Heart right ventricle (tissue), 16 donors: ENCODE measurements at regions of chr11 and their contacts with region 1.

Region 1: DNA sequence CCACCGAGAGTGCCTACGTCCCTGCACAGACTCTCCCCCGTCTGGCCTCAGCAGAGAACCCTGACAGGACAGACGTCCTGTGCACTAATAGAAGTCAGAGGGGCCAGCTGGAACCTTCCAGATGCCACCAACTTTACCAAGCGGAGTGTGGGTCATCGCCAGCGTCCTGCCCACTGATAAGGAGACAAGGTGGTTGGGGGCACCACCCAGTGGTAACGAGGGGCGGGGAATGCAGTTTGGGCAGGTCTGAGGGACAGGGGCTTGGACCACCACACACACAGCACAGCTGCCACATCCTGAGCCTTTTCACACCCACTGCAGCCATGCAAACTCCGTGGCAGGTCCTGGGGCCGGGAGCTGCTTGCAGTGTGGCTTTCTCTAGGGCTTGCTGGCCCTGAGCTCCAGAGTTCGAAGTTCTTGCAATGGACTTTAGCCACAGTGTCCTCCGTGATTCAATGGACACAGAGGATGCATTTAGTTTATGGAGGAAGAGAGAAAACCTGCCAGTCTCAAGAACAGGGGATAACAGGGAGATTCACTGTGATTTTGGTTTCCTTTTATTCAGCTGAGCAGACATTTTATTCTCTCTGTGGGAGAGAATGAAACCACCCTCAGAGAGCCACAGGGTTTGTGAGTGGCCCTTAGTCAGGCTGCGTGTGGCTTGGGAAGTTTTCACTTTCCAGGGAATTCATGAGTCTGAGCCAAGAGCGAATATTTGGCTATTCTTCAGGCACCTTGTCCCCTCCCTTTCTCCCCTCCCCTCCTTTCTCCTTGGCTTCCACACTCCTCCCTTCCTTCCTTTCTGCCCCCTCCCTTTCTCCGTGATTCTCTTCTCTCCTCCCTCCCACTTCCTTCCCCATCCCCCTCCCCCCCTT is 13.1 kb downstream of the MRGPRG start:
- DNase-seq: no peak
- ATAC-seq: no peak
- H3K4me3 ChIP-seq: no peak overlapping the region
- H3K27ac ChIP-seq: no peak overlapping the region
- H3K4me1 ChIP-seq: peaks cover 3 to 26% (median 13%) of the 10 kb centered on the region in 9 donors
- H3K27me3 ChIP-seq: peaks cover 13 to 49% (median 42%) of the 10 kb centered on the region in 7 donors
- CTCF ChIP-seq: no peak

Region 2: DNA sequence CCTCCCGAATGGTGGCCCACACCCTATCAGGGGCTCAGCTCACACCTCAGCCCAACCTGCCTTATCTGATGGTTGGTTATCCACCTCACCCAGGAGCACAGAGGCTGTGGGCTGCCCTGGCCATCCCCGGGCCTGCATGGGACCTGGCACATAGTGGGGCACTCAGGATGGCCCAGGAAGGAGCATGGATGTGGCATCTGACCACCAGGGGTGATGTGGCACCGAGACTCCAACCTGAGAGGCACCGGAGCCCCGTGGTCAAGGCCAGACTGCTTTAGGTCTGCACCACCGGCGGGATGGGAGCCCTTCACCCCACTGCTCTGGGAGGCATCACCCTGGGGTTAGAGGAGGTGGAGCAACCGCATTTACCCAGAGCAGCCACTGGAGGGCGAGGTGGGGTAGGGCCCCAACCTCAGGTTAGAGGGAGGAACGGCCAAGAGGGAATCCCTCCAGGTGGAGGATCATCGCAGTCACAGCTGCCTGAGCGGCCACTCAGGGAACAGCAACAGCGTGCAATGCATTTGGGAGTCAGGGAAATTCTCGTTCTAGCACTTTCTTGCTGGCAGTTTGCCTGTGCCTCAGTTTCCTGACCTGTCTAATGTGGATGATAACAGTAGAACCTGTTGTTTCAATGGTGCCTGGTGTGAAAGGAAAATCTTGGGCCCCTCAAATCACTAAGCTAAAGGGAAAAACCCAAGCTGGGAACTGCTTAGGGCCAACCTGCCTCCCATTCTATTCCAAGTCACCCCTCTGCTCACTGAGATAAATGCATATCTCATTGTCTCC is 95.4 kb before region 1 on chr11:
- intact Hi-C with region 1: loop called in 1 of 10 experiments (anchors 2 kb)
- DNase-seq: peak in 1 of 2 donors; percentile 45
- ATAC-seq: peak; percentile 8 to 75 (median 73)
- H3K4me3 ChIP-seq: no peak overlapping the region
- H3K27ac ChIP-seq: no peak overlapping the region
- H3K4me1 ChIP-seq: peaks cover 0 to 19% (median 0%) of the 10 kb centered on the region in 9 donors
- H3K27me3 ChIP-seq: no peaks in the 10 kb centered on the region
- CTCF ChIP-seq: peak; percentile 47 to 76 (median 68)